ENCODE measurements at regions of chr12 and their contacts with region 1.

Region 1: GRCh38 chr12:25107920-25108319 is 87.0 kb downstream of the DNAI7 start:
- DNase-seq: no peak
- ATAC-seq: no peak
- H3K4me3 ChIP-seq: no peak overlapping the region
- H3K4me3 Mint-ChIP-seq: no peak overlapping the region
- H3K27ac ChIP-seq: peak overlapping the region in 1 of 2 donors; percentile 67
- H3K27ac Mint-ChIP-seq: peak overlapping the region; percentile 71
- H3K4me1 ChIP-seq: peaks cover 5 to 6% of the 10 kb centered on the region in 2 donors
- H3K4me1 Mint-ChIP-seq: peaks cover 12% of the 10 kb centered on the region
- H3K27me3 ChIP-seq: no peaks in the 10 kb centered on the region
- H3K27me3 Mint-ChIP-seq: no peaks in the 10 kb centered on the region
- CTCF ChIP-seq: no peak

Region 2: GRCh38 chr12:23816394-23816851 is 1291.5 kb before region 1 on chr12:
- CTCF ChIA-PET with region 1: no interaction called
- POLR2A ChIA-PET with region 1: no interaction called
- intact Hi-C with region 1: no loop called
- DNase-seq: no peak
- ATAC-seq: no peak
- H3K4me3 ChIP-seq: no peak overlapping the region
- H3K4me3 Mint-ChIP-seq: no peak overlapping the region
- H3K27ac ChIP-seq: no peak overlapping the region
- H3K27ac Mint-ChIP-seq: no peak overlapping the region
- H3K4me1 ChIP-seq: no peaks in the 10 kb centered on the region
- H3K4me1 Mint-ChIP-seq: no peaks in the 10 kb centered on the region
- H3K27me3 ChIP-seq: no peaks in the 10 kb centered on the region
- H3K27me3 Mint-ChIP-seq: no peaks in the 10 kb centered on the region
- CTCF ChIP-seq: no peak

Region 3: GRCh38 chr12:24960222-24960855 is 147.6 kb before region 1 on chr12:
- CTCF ChIA-PET with region 1: no interaction called
- POLR2A ChIA-PET with region 1: no interaction called
- intact Hi-C with region 1: no loop called
- DNase-seq: peak; percentile 45
- ATAC-seq: peak; percentile 62
- H3K4me3 ChIP-seq: no peak overlapping the region
- H3K4me3 Mint-ChIP-seq: no peak overlapping the region
- H3K27ac ChIP-seq: no peak overlapping the region
- H3K27ac Mint-ChIP-seq: no peak overlapping the region
- H3K4me1 ChIP-seq: no peaks in the 10 kb centered on the region
- H3K4me1 Mint-ChIP-seq: peaks cover 2% of the 10 kb centered on the region
- H3K27me3 ChIP-seq: no peaks in the 10 kb centered on the region
- H3K27me3 Mint-ChIP-seq: no peaks in the 10 kb centered on the region
- CTCF ChIP-seq: peak; percentile 47

Region 4: GRCh38 chr12:25074954-25075353 is 33.0 kb before region 1 on chr12:
- CTCF ChIA-PET with region 1: no interaction called
- POLR2A ChIA-PET with region 1: no interaction called
- intact Hi-C with region 1: loop called (anchors 5 kb)
- DNase-seq: no peak
- ATAC-seq: peak; percentile 43
- H3K4me3 ChIP-seq: no peak overlapping the region
- H3K4me3 Mint-ChIP-seq: peak overlapping the region; percentile 29
- H3K27ac ChIP-seq: peak overlapping the region in 1 of 2 donors; percentile 54
- H3K27ac Mint-ChIP-seq: peak overlapping the region; percentile 62
- H3K4me1 ChIP-seq: peaks cover 43 to 44% of the 10 kb centered on the region in 2 donors
- H3K4me1 Mint-ChIP-seq: peaks cover 64% of the 10 kb centered on the region
- H3K27me3 ChIP-seq: no peaks in the 10 kb centered on the region
- H3K27me3 Mint-ChIP-seq: no peaks in the 10 kb centered on the region
- CTCF ChIP-seq: no peak

Region 5: DNA sequence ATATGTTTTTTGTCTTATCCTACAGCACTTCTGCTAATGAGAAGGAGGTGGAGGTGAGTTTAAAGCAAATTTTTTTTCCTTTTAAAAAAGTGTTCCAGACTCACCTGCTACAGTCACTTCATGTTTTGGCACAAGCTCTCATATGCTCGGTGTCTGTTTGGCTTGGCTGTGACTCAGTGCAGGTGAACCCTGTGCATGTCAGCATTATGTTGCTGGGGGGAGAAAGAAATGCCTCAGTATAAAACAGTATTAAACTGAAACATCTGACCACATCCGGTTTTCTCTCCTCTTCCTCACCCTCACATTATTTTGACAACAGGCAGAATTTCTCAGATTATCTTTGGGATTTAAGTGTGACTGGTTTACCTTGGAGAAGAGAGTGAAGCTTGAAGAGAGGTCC is 18.2 kb before region 1 on chr12:
- CTCF ChIA-PET with region 1: no interaction called
- POLR2A ChIA-PET with region 1: no interaction called
- intact Hi-C with region 1: loop called (anchors 2 kb)
- DNase-seq: no peak
- ATAC-seq: no peak
- H3K4me3 ChIP-seq: no peak overlapping the region
- H3K4me3 Mint-ChIP-seq: no peak overlapping the region
- H3K27ac ChIP-seq: peak overlapping the region; percentile 36 to 61
- H3K27ac Mint-ChIP-seq: peak overlapping the region; percentile 71
- H3K4me1 ChIP-seq: peaks cover 5 to 15% of the 10 kb centered on the region in 2 donors
- H3K4me1 Mint-ChIP-seq: peaks cover 60% of the 10 kb centered on the region
- H3K27me3 ChIP-seq: no peaks in the 10 kb centered on the region
- H3K27me3 Mint-ChIP-seq: no peaks in the 10 kb centered on the region
- CTCF ChIP-seq: no peak